H1 (cell line): ENCODE measurements at regions of chr1 and their contacts with region 1.

Region 1: DNA sequence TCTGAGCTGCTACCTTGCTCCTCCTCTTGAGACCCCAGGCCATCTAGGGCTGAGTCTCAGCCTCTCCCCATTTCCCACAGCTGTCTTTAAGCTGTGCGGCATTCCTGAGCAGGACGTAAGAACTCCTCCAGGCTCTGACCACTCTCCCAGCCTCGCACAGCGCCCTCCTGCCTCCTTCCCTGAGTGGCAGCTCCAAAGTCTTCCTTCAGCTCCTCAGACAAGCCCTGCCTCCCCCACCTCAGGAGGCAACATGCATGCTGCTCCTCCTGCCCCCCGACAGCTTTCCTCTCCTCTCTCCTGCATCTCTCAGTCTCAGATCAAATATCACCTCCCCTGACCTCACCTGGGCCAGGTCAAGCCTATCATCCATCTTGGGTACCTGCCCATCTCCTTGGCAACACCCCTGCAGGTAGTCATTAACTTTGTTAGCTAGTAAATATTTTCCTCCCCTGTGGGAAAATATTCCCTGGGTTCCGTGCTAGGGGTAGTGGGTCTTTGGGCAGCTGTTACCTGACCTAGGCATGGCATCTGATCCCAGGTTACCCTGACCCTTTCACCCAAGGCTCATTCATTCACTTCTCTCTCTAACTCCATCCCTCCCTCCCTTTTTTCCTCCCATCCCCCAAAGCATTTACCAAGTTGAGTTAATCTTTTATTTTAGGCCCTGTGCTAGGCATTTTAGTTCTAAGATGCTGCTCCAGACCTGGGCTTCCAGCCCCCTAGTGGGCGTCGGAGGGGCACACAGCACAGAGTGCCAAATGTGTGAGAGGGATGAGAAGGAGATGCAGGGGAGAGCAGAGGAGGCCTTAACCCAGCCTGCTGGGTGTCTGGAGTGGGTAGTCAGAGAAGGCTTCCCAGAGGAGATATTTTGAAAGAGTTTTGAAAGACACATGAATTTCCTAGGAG is 419.9 kb downstream of the PTPRU start:
- DNase-seq: peak in 1 of 2 experiments; percentile 69
- H3K4me3 ChIP-seq: no peak overlapping the region
- H3K27ac ChIP-seq: no peak overlapping the region
- H3K4me1 ChIP-seq: peaks cover 0 to 5% (median under 1%) of the 10 kb centered on the region in 4 experiments; a peak in 3 of 7 replicates
- H3K27me3 ChIP-seq: no peaks in the 10 kb centered on the region
- CTCF ChIP-seq: peak; percentile 72 to 80 (median 79)
- EP300 ChIP-seq: no peak
- POLR2A ChIP-seq: no peak
- RAD21 ChIP-seq: peak; percentile 61 to 73

Region 2: GRCh38 chr1:29639741-29640427 is 16.3 kb before region 1 on chr1:
- CTCF ChIA-PET with region 1: interaction called, 26 read pairs
- POLR2A ChIA-PET with region 1: no interaction called
- DNase-seq: peak in 1 of 2 experiments; percentile 38
- H3K4me3 ChIP-seq: no peak overlapping the region
- H3K27ac ChIP-seq: no peak overlapping the region
- H3K4me1 ChIP-seq: no peaks in the 10 kb centered on the region
- H3K27me3 ChIP-seq: no peaks in the 10 kb centered on the region
- CTCF ChIP-seq: no peak
- EP300 ChIP-seq: no peak
- POLR2A ChIP-seq: no peak
- RAD21 ChIP-seq: no peak

Region 3: GRCh38 chr1:29669158-29669871 is 13.1 kb after region 1 on chr1:
- CTCF ChIA-PET with region 1: interaction called, 22 read pairs
- POLR2A ChIA-PET with region 1: no interaction called
- DNase-seq: peak in 1 of 2 experiments; percentile 23
- H3K4me3 ChIP-seq: no peak overlapping the region
- H3K27ac ChIP-seq: no peak overlapping the region
- H3K4me1 ChIP-seq: peaks cover 0 to 2% (median 0%) of the 10 kb centered on the region in 4 experiments; a peak in 2 of 7 replicates
- H3K27me3 ChIP-seq: no peaks in the 10 kb centered on the region
- CTCF ChIP-seq: no peak
- EP300 ChIP-seq: no peak
- POLR2A ChIP-seq: no peak
- RAD21 ChIP-seq: no peak